Activated naive CD4-positive, alpha-beta T cell treated with anti-CD3 and anti-CD28 coated beads for 36 hours (primary cell): ENCODE measurements at regions of chr1 and their contacts with region 1.

Region 1: GRCh38 chr1:234544087-234544579 is 65.2 kb upstream of the TARBP1 start:
- DNase-seq: peak; percentile 89
- H3K4me3 Mint-ChIP-seq: no peak overlapping the region
- H3K27ac Mint-ChIP-seq: peak overlapping the region; percentile 69
- H3K4me1 Mint-ChIP-seq: peaks cover 19% of the 10 kb centered on the region
- H3K27me3 Mint-ChIP-seq: no peaks in the 10 kb centered on the region

Region 2: DNA sequence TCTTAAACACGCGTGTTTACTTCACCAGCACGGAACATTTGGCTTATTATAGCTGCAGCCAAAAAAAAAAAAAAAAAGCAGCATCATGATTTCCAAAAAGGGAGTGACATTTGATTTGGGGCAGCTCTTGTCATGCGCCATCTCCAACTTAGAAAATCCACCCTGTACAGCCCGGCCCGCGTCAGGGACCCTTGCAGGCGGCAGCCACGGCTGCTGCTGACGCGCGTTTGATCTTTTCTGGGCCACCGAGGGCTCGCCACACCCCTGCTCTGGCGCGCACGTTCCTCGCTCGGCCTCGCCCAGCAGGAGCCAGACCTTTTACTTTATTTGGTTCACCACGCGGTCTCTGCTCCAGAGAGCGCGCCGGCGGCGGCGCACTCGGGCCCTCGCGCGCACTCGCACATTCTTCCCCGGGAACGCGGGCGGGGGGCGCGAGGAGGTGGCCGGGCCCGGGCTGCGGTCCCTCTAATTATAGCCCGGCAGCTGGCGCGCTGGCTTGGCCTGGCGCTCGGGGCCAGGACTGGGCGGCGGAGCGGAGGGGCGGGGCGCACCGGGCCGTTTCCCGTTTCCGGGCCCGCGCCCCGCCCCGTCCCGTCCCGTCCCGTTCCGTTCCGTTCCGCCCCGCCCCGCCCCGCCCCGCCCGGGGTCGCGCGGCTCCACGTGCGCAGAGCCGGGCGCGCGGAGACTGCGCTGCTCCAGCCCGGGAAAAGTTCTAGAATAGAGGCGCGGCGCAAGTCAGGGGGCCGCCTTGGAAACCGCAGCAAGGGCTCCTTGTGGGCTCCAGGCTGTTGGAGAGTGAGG is 55.7 kb after region 1 on chr1:
- CTCF ChIA-PET with region 1: interaction called, 3 read pairs
- intact Hi-C with region 1: loop called (anchors 2 kb)
- DNase-seq: peak; percentile 74
- H3K4me3 Mint-ChIP-seq: peak overlapping the region; percentile 83
- H3K27ac Mint-ChIP-seq: peak overlapping the region; percentile 99
- H3K4me1 Mint-ChIP-seq: peaks cover 50% of the 10 kb centered on the region
- H3K27me3 Mint-ChIP-seq: no peaks in the 10 kb centered on the region